HAP-1 (cell line): ENCODE measurements at regions of chr12 and their contacts with region 1.

Region 1: GRCh38 chr12:31659087-31659933 is at the start of gene ETFBKMT:
- DNase-seq: peak; percentile 96
- H3K4me3 ChIP-seq: peak within 1 kb of the TSS; percentile 46
- H3K4me1 ChIP-seq: peaks cover 2% of the 10 kb centered on the region
- H3K27me3 ChIP-seq: no peaks in the 10 kb centered on the region

Region 2: GRCh38 chr12:30169839-30170591 is 1489.3 kb before region 1 on chr12:
- in situ Hi-C with region 1: no loop called
- DNase-seq: no peak
- H3K4me3 ChIP-seq: no peak overlapping the region
- H3K4me1 ChIP-seq: no peaks in the 10 kb centered on the region
- H3K27me3 ChIP-seq: no peaks in the 10 kb centered on the region

Region 3: GRCh38 chr12:32302218-32303173 is 643.2 kb after region 1 on chr12:
- in situ Hi-C with region 1: loop called (anchors 10 kb)
- DNase-seq: no peak
- H3K4me3 ChIP-seq: no peak overlapping the region
- H3K4me1 ChIP-seq: peaks cover 3% of the 10 kb centered on the region; the same call in 1 of the 2 replicates
- H3K27me3 ChIP-seq: no peaks in the 10 kb centered on the region

Region 4: DNA sequence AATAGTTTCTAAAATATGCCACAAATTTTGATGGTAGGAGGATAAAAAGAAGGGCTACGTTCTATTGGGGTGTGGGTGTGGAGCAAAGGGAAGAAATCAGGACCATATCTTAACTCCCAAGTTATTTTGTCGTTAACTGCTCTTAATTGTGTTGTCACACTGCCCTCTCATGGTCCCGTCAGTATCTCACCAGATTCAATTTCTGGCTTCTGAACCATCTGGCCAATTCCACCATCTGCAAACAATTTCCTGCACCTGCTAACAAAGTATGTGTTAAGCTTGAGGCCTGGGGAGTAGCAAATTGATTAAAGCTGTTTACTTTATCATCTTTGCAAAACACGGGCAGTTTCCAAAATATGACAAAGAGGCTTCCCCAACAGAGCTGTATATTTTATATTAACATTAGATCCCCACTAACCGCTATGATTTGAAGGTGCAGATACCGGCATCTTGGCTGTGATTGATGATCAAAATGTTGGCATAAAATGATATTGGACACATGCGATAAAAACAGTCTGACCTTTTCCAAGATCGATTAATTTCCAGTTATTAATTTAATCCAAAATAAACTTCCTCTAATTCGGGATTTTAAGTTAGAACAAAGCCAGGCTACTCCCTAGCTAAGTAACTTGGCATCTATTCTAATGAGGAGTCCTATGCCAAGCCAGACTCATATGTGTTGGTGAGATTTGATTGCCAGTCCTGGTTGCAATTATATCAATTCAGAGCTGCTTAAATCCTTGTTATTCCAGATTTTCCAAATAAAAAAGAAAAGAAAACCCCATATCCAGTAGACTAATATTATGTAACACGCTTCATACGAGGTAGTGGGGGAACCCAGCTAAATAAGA is 1012.8 kb after region 1 on chr12:
- in situ Hi-C with region 1: loop called (anchors 25 kb)
- DNase-seq: peak; percentile 56 to 75
- H3K4me3 ChIP-seq: no peak overlapping the region
- H3K4me1 ChIP-seq: no peaks in the 10 kb centered on the region
- H3K27me3 ChIP-seq: no peaks in the 10 kb centered on the region